Activated T-helper 1 cell treated with anti-CD3 and anti-CD28 coated beads, Interleukin-12 subunit alpha, Interleukin-12 subunit beta, Interleukin-2, Interleukin-4 antibody, amounts not matched to agents 30 ng/mL and 10 ng/mL and 1 ng/mL, durations not matched to agents 14 hours and 24 hours and 36 hours (primary cell): ENCODE measurements at regions of chrX and their contacts with region 1.

Region 1: DNA sequence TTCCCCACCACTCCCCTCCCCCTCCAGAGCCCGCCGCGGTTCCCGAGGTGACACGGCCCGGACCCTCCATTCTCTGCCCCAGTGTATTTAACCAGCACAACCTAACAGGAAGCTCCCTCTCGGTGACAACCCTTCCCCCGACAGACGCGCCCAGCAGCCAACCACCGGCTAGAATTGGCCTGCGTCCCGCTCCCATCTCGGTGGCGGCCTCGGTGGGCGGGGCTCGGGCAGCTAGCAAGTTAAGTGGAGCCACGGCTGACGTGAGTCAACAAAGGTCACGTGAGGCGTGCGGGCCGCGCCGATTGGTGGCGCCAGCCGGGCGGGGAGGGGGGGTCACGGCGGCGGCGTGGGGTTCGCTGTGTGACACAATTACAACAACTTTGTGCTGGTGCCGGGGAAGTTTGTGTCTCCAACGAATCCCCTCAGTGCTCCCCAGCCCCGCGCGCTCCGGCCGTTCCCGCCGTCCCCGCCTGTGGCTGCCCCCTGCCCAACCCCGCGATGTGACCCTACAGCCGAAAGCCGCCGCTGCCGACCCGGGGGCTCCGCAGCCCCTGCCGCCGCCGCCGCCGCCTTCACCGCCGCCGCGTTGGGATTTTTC is at the start of gene KDM6A:
- DNase-seq: peak; percentile 91
- H3K4me3 Mint-ChIP-seq: peak within 1 kb of the TSS; percentile 97
- H3K27ac Mint-ChIP-seq: peak within 1 kb of the TSS; percentile 98
- H3K4me1 Mint-ChIP-seq: peaks cover 6% of the 10 kb centered on the region
- H3K27me3 Mint-ChIP-seq: no peaks in the 10 kb centered on the region
- total RNA-seq, gene KDM6A: 26.4 and 28.1 TPM in 2 replicates

Region 2: DNA sequence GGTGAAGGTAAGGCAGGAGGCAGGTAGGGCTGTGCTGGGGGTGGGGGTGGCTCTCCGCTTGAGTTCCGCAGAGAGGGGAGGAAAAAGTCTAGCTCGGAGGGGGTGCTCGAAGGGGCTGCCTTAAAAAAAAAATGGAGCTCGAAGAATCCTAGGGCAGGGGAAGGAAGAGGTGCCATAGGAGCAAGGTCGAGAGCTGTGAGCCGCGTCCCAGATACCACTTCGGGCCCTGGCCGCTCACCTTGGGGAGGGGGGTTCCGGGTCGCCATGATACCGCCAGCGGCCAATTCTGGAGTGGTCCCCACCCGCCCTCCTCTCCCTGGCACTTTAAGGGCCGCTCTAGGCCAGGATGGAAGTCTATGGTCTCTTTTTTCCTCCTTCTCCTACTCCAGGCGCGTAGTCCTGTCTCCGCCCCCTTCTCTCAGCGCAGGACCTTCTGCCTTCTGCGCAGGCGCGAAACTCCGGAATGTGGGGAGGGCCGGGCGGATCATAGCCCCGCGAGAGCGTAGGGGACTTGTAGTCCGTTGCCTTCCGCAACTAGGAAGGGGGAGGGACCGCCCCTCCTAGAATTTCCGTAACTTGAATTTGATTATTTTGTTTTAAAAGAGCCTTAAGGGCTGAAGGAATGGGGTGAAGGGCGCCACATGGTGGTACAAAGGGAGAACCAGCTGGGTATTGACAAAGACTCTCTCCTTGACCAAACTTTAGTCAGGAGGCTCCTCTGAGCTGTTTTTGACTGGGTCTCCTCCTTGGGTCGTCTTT is 330.2 kb before region 1 on chrX and contains the start of gene FUNDC1:
- intact Hi-C with region 1: loop called (anchors 1 kb)
- DNase-seq: peak; percentile 82
- H3K4me3 Mint-ChIP-seq: peak within 1 kb of the TSS; percentile 92
- H3K27ac Mint-ChIP-seq: peak within 1 kb of the TSS; percentile 94
- H3K4me1 Mint-ChIP-seq: peaks cover 10% of the 10 kb centered on the region
- H3K27me3 Mint-ChIP-seq: peaks cover 1% of the 10 kb centered on the region
- total RNA-seq, gene FUNDC1: 11.2 and 12.5 TPM in 2 replicates

Region 3: GRCh38 chrX:44770121-44770520 is 102.8 kb before region 1 on chrX:
- intact Hi-C with region 1: no loop called
- DNase-seq: no peak
- H3K4me3 Mint-ChIP-seq: no peak overlapping the region
- H3K27ac Mint-ChIP-seq: no peak overlapping the region
- H3K4me1 Mint-ChIP-seq: no peaks in the 10 kb centered on the region
- H3K27me3 Mint-ChIP-seq: peaks cover 3% of the 10 kb centered on the region

Region 4: DNA sequence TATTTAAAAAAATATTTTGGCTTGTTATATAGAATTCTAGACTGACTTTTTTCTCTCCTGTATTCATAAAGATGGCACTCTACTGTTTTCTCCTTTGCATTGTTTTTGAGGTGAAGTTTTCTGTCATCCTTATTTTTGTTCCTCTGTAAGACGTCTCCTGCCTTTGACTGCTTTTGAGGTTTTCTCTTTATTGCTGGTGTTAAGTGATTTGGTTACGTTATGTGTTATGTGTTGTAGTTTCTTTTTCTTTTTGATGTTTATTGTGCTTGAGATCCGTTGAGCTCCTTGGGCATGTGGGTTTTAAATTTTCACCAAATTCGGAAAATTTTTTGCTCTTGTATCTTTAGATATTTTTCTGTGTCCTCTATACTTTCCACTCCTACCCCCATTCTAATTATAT is 50.1 kb after region 1 on chrX:
- intact Hi-C with region 1: loop called (anchors 1 kb)
- DNase-seq: no peak
- H3K4me3 Mint-ChIP-seq: peak overlapping the region; percentile 40
- H3K27ac Mint-ChIP-seq: peak overlapping the region; percentile 42
- H3K4me1 Mint-ChIP-seq: peaks cover 30% of the 10 kb centered on the region
- H3K27me3 Mint-ChIP-seq: no peaks in the 10 kb centered on the region

Region 5: GRCh38 chrX:45070116-45071007 is 197.4 kb after region 1 on chrX:
- intact Hi-C with region 1: loop called (anchors 1 kb)
- DNase-seq: no peak
- H3K4me3 Mint-ChIP-seq: no peak overlapping the region
- H3K27ac Mint-ChIP-seq: peak overlapping the region; percentile 63
- H3K4me1 Mint-ChIP-seq: peaks cover 44% of the 10 kb centered on the region
- H3K27me3 Mint-ChIP-seq: no peaks in the 10 kb centered on the region

Region 6: GRCh38 chrX:45154036-45154365 is 281.1 kb after region 1 on chrX:
- intact Hi-C with region 1: no loop called
- DNase-seq: no peak
- H3K4me3 Mint-ChIP-seq: no peak overlapping the region
- H3K27ac Mint-ChIP-seq: no peak overlapping the region
- H3K4me1 Mint-ChIP-seq: no peaks in the 10 kb centered on the region
- H3K27me3 Mint-ChIP-seq: no peaks in the 10 kb centered on the region

Region 7: GRCh38 chrX:45515262-45516215 is 642.6 kb after region 1 on chrX:
- intact Hi-C with region 1: loop called (anchors 10 kb)
- DNase-seq: peak; percentile 1
- H3K4me3 Mint-ChIP-seq: no peak overlapping the region
- H3K27ac Mint-ChIP-seq: peak overlapping the region; percentile 65
- H3K4me1 Mint-ChIP-seq: peaks cover 25% of the 10 kb centered on the region
- H3K27me3 Mint-ChIP-seq: no peaks in the 10 kb centered on the region

Region 8: GRCh38 chrX:46836701-46837557 is 1964.0 kb after region 1 on chrX and contains the start of gene RP2:
- intact Hi-C with region 1: loop called (anchors 10 kb)
- DNase-seq: peak; percentile 79
- H3K4me3 Mint-ChIP-seq: peak within 1 kb of the TSS; percentile 96
- H3K27ac Mint-ChIP-seq: peak within 1 kb of the TSS; percentile 89
- H3K4me1 Mint-ChIP-seq: no peaks in the 10 kb centered on the region
- H3K27me3 Mint-ChIP-seq: peaks cover 4% of the 10 kb centered on the region
- total RNA-seq, gene RP2: 7.1 and 7.5 TPM in 2 replicates